Prostate gland (tissue), 2 donors: ENCODE measurements at regions of chr4 and their contacts with region 1.

Region 1: DNA sequence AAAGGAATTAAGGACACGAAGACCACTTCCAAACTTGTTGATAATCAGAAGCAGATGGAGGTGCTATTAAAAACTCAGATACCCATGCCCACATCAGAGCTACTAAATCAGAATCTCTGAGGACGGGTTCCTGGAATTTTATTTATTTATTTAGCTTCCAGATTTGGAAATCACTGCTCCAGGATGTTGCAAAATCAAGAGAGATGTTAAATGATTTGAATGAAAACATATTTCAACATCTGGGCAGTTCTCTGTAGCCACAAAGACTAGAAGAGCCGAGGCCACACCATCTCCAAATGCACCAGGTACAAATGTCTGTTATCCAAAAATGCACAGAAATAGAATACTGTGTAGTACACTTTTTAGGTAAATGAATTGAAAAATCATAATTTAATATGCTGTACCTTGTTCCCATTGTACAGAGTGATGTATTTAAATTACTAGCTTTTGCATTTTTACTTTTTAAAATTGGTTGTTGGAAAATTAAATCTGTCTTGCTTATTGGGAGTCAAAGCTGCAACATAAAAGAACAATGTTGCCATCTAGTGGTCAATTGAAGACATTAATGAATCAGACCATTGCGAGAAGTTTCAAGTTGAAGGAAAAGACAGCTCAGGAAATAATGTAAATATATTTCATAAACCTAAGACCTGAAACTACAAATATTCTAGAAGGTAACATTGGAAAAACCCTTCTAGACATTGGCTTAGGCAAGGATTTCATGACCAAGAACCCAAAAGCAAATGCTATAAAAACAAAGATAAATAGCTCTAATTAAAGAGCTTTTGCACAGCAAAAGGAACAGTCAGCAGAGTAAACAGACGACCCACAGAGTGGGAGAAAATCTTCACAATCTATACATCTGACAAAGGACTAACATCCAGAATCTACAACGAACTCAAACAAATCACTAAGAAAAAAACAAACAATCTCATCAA is 151.3 kb upstream of the TTC29 start:
- DNase-seq: no peak
- H3K4me3 ChIP-seq: no peak overlapping the region
- H3K27ac ChIP-seq: no peak overlapping the region
- H3K4me1 ChIP-seq: no peaks in the 10 kb centered on the region
- H3K27me3 ChIP-seq: no peaks in the 10 kb centered on the region
- CTCF ChIP-seq: peak; percentile 49 to 78 (median 77)
- POLR2A ChIP-seq: no peak

Region 2: GRCh38 chr4:147019061-147019460 is 77.9 kb before region 1 on chr4:
- intact Hi-C with region 1: loop called (anchors 5 kb)
- DNase-seq: peak; percentile 43
- H3K4me3 ChIP-seq: no peak overlapping the region
- H3K27ac ChIP-seq: no peak overlapping the region
- H3K4me1 ChIP-seq: no peaks in the 10 kb centered on the region
- H3K27me3 ChIP-seq: no peaks in the 10 kb centered on the region
- CTCF ChIP-seq: peak in 3 of 4 experiments; percentile 49 to 57 (median 56)
- POLR2A ChIP-seq: no peak